ENCODE measurements at regions of chr5 and their contacts with region 1.

Region 1: DNA sequence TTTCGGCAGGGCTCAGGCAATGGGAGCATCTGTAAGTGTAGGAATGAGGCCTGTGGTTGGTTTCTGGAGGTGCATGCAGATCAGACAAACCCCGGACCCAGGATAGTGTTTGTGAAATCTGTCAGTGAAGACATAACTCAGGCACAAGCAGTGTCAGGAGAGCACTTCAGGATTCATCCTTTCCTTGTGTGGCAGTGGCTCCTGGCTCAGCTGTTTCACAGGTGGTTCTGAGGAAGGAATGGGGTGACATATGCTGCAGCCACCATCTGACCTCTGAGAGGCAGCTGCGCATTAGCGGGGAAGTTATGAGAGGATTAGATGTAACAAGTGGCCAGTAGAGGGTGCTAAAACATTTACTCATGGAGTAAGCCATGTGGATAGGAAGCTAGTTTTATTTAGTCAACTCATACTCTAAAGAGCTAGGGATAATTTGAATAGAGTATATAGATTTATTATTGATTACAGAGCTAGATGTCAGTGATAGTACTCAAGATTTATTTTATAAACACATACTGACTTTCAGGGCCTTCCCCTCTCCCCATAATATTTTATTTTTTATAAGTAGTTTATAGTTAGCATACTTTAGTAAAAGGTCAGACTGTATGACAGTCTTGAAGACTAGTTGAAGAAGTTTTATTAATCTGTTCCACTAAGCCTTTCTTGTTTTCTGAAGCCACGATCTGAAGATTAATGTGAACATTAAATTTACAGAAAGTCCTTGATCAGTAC is 28.4 kb downstream of the NNT start:
- DNase-seq: peak; percentile 78
- H3K4me3 Mint-ChIP-seq: no peak overlapping the region
- H3K27ac Mint-ChIP-seq: peak overlapping the region; percentile 46
- H3K4me1 Mint-ChIP-seq: no peaks in the 10 kb centered on the region
- H3K27me3 Mint-ChIP-seq: no peaks in the 10 kb centered on the region
- CTCF ChIP-seq: peak; percentile 63

Region 2: DNA sequence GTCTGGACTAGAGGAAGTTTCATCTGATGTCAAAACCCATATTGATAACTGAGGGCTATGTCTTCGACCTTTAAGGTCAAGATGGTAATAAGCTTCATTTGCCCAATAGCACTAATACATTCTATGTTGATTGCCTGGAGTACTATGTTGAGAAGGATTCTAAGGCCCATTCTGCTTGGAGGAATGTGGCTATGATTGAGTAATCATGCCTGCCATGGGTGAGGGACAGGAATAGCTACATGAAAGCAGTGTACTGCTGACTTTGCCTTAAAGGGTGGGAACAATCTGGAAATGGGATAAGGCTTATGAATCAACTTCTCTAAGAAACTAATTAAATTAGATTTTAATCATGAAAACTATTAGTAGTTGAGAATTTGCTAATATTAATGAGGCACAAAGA is 14.8 kb before region 1 on chr5:
- CTCF ChIA-PET with region 1: interaction called, 19 read pairs
- POLR2A ChIA-PET with region 1: interaction called, 3 read pairs
- intact Hi-C with region 1: no loop called
- DNase-seq: peak; percentile 55
- H3K4me3 Mint-ChIP-seq: no peak overlapping the region
- H3K27ac Mint-ChIP-seq: no peak overlapping the region
- H3K4me1 Mint-ChIP-seq: peaks cover 14% of the 10 kb centered on the region
- H3K27me3 Mint-ChIP-seq: no peaks in the 10 kb centered on the region
- CTCF ChIP-seq: no peak

Region 3: DNA sequence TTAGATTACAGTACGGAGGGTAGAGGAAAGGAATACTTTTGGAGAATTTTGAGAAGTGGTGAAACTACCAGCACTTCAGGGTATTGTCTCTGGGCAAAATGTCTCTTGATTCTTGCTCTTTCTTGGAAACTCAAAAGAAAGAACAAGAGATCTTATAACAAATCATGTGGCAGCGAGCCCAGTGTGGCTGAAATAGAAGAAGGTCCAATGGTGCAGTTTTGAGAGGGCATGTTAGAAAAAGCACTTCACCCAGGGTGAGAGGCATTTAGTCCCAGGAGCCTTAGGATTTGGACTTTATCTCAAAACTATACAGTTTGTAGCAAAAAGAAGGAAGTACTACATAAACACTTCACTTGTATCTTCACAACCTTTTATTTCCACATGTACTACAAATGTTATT is 11.1 kb after region 1 on chr5:
- CTCF ChIA-PET with region 1: interaction called, 24 read pairs
- POLR2A ChIA-PET with region 1: no interaction called
- intact Hi-C with region 1: no loop called
- DNase-seq: no peak
- H3K4me3 Mint-ChIP-seq: no peak overlapping the region
- H3K27ac Mint-ChIP-seq: no peak overlapping the region
- H3K4me1 Mint-ChIP-seq: peaks cover 7% of the 10 kb centered on the region
- H3K27me3 Mint-ChIP-seq: no peaks in the 10 kb centered on the region
- CTCF ChIP-seq: no peak

Region 4: DNA sequence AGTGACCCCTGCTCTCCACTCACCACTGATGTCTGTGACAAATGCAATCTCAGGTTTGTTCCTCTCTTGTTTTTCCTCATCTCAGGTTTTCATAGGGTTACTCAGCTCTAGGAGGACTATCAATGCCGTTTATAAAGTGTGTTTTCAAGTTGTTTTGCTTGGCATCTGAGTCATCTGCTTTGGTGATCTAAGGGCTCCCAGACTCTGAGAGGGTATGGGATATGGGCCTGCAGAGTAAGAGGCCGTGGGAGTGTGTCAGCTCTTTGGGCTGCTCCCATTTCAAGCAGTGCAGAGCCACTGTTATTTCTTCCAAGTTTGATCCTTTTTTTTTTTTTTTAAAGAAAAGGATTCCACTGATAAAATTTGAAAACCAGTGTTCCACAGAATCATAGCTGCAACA is 17.9 kb after region 1 on chr5:
- CTCF ChIA-PET with region 1: interaction called, 17 read pairs
- POLR2A ChIA-PET with region 1: no interaction called
- intact Hi-C with region 1: no loop called
- DNase-seq: no peak
- H3K4me3 Mint-ChIP-seq: no peak overlapping the region
- H3K27ac Mint-ChIP-seq: no peak overlapping the region
- H3K4me1 Mint-ChIP-seq: no peaks in the 10 kb centered on the region
- H3K27me3 Mint-ChIP-seq: no peaks in the 10 kb centered on the region
- CTCF ChIP-seq: no peak

Region 5: DNA sequence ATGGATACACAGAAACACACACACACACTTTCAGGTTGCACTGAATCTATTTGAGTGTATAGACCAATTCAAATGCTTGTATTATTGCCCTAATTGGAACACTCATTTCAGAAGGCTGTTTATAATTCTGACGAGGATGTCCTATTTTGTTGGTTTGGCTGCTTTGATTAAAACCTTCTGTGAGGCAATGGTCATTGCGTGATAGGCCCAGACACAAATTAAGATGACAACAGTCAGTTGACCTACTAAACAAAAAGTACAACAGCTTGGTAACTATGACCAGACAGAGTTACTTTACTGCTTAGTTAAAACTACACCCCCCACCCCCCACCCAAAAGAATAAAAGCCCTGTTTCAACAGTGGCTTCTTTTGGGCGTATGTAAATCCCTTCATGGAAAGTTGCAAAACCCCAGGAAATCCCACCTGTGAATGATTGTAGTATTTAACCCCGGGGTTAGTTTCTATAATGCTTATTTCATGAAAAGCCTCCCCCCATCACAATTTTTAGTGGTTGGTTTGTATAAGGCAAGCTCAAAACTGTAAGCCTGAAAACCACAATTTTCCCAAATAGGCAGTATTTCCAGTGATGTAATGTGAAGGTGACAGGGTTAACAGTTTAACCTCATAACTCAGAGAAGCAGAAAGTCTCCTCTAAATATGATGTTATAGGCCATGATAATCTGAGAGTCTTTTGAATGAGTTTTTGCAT is 417.1 kb after region 1 on chr5:
- CTCF ChIA-PET with region 1: no interaction called
- POLR2A ChIA-PET with region 1: no interaction called
- intact Hi-C with region 1: no loop called
- DNase-seq: no peak
- H3K4me3 Mint-ChIP-seq: no peak overlapping the region
- H3K27ac Mint-ChIP-seq: no peak overlapping the region
- H3K4me1 Mint-ChIP-seq: no peaks in the 10 kb centered on the region
- H3K27me3 Mint-ChIP-seq: no peaks in the 10 kb centered on the region
- CTCF ChIP-seq: no peak

Region 6: DNA sequence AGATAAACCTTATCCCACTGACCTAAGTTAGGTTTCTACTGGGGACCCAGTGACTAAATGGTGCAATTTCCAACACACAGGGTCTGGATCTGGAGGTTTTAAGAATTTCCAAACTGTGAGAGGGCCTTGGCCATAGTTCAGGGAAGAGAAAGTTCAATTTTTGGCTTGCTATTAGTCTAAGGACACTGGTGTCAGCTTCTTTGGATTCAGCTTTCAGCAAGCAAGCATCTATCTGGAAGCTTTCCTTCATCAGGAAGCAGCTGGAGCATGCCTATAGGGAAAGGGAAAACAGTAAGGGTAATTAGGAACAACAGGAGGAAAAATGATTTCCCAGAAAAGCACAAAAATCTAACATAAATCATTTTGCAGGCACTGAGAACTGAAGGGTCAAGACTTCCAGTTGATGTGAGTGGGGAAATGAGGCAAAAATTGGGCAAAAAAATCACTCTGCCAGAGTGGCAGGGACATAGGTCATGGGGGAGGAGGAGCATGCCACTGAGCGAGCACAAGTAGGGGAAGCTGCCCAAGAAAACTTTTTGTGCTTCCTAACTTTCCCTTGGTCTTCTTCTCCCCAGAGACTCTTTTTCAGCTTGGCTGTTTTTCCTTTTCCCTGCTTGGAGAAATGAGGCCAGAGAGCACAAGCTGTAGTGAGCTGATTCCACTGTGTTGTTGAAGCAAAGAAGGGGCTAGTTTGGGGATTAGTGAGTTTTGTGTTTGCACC is 458.2 kb after region 1 on chr5:
- CTCF ChIA-PET with region 1: no interaction called
- POLR2A ChIA-PET with region 1: no interaction called
- intact Hi-C with region 1: no loop called
- DNase-seq: no peak
- H3K4me3 Mint-ChIP-seq: no peak overlapping the region
- H3K27ac Mint-ChIP-seq: no peak overlapping the region
- H3K4me1 Mint-ChIP-seq: peaks cover 6% of the 10 kb centered on the region
- H3K27me3 Mint-ChIP-seq: no peaks in the 10 kb centered on the region
- CTCF ChIP-seq: no peak

Region 7: GRCh38 chr5:44150075-44150723 is 518.9 kb after region 1 on chr5:
- CTCF ChIA-PET with region 1: no interaction called
- POLR2A ChIA-PET with region 1: no interaction called
- intact Hi-C with region 1: no loop called
- DNase-seq: no peak
- H3K4me3 Mint-ChIP-seq: no peak overlapping the region
- H3K27ac Mint-ChIP-seq: no peak overlapping the region
- H3K4me1 Mint-ChIP-seq: no peaks in the 10 kb centered on the region
- H3K27me3 Mint-ChIP-seq: no peaks in the 10 kb centered on the region
- CTCF ChIP-seq: no peak